Activated naive CD8-positive, alpha-beta T cell treated with anti-CD3 and anti-CD28 coated beads, Interleukin-2, amount 10 ng/mL, durations not matched to agents 7 days and 5 days (primary cell): ENCODE measurements at regions of chr11 and their contacts with region 1.

Region 1: GRCh38 chr11:727859-728748 is 19.2 kb upstream of the TALDO1 start:
- DNase-seq: peak; percentile 89
- ATAC-seq: peak; percentile 59
- H3K4me3 Mint-ChIP-seq: no peak overlapping the region
- H3K27ac Mint-ChIP-seq: no peak overlapping the region
- H3K4me1 Mint-ChIP-seq: peaks cover 9% of the 10 kb centered on the region
- H3K27me3 Mint-ChIP-seq: peaks cover 3% of the 10 kb centered on the region

Region 2: GRCh38 chr11:535519-536454 is 192.3 kb before region 1 on chr11 and contains the start of gene HRAS:
- POLR2A ChIA-PET with region 1: interaction called, 10 read pairs
- DNase-seq: peak; percentile 99
- ATAC-seq: peak; percentile 87
- H3K4me3 Mint-ChIP-seq: peak within 1 kb of the TSS; percentile 89
- H3K27ac Mint-ChIP-seq: peak within 1 kb of the TSS; percentile 92
- H3K4me1 Mint-ChIP-seq: peaks cover 7% of the 10 kb centered on the region
- H3K27me3 Mint-ChIP-seq: no peaks in the 10 kb centered on the region
- total RNA-seq, gene HRAS: 47.6 to 49.9 TPM

Region 3: GRCh38 chr11:554824-555472 is 173.2 kb before region 1 on chr11:
- POLR2A ChIA-PET with region 1: interaction called, 26 read pairs
- DNase-seq: peak; percentile 84
- ATAC-seq: peak; percentile 71
- H3K4me3 Mint-ChIP-seq: peak overlapping the region; percentile 61
- H3K27ac Mint-ChIP-seq: no peak overlapping the region
- H3K4me1 Mint-ChIP-seq: peaks cover 4% of the 10 kb centered on the region
- H3K27me3 Mint-ChIP-seq: peaks cover 18% of the 10 kb centered on the region

Region 4: DNA sequence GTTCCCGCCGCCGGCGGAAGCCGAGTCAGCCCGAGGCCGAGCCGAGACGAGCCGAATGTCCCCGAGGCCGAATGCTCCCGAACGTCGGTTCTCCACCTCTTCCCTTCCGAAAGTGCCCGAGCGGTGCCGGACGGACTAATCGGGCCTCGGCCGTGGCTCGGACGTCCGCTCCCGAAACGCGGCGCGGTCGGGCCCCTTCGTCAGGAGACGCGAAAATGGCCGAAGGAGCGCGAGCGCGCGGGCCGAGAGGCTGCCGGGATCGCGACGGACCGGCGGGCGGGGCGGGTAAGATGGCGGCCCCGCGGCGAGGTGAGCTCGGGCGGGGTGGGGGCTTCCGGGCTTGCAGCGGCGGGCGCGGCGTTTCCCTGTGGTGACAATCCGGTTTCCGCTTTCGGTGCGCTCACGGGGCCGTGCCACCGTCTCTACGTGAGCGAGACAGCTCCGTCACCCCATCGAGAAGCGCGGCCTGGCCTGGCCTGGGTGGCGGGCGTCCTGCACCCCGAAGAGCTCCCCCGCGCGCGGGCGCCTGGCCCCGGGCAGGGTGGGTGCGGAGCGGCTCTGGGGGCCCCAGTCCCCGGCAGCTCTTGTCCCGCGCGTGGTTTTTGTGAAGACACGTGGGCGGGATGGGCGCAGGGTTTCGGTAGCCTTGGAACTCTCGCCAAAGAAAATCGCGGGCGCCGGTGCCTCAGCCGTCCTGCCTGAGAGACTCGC is 32.4 kb before region 1 on chr11 and contains the start of gene TMEM80:
- POLR2A ChIA-PET with region 1: interaction called, 24 read pairs
- DNase-seq: peak; percentile 97
- ATAC-seq: peak; percentile 74
- H3K4me3 Mint-ChIP-seq: peak within 1 kb of the TSS; percentile 89
- H3K27ac Mint-ChIP-seq: peak within 1 kb of the TSS; percentile 94
- H3K4me1 Mint-ChIP-seq: peaks cover 41% of the 10 kb centered on the region
- H3K27me3 Mint-ChIP-seq: no peaks in the 10 kb centered on the region
- total RNA-seq, gene TMEM80: 38.9 to 39.7 TPM

Region 5: GRCh38 chr11:747158-748006 is 19.3 kb after region 1 on chr11 and contains the start of gene TALDO1:
- POLR2A ChIA-PET with region 1: interaction called, 11 read pairs
- DNase-seq: peak; percentile 91
- ATAC-seq: peak; percentile 85
- H3K4me3 Mint-ChIP-seq: peak within 1 kb of the TSS; percentile 92
- H3K27ac Mint-ChIP-seq: peak within 1 kb of the TSS; percentile 85
- H3K4me1 Mint-ChIP-seq: peaks cover 16% of the 10 kb centered on the region
- H3K27me3 Mint-ChIP-seq: no peaks in the 10 kb centered on the region
- total RNA-seq, gene TALDO1: 199 to 206 TPM